Mammary epithelial cell (primary cell): ENCODE measurements at regions of chrX and their contacts with region 1.

Region 1: GRCh38 chrX:57651169-57651919 is 28.7 kb downstream of the NLRP2B start:
- DNase-seq: no peak
- H3K4me3 ChIP-seq: no peak overlapping the region
- H3K27ac ChIP-seq: no peak overlapping the region
- H3K4me1 ChIP-seq: no peaks in the 10 kb centered on the region
- H3K27me3 ChIP-seq: no peaks in the 10 kb centered on the region
- CTCF ChIP-seq: no peak

Region 2: DNA sequence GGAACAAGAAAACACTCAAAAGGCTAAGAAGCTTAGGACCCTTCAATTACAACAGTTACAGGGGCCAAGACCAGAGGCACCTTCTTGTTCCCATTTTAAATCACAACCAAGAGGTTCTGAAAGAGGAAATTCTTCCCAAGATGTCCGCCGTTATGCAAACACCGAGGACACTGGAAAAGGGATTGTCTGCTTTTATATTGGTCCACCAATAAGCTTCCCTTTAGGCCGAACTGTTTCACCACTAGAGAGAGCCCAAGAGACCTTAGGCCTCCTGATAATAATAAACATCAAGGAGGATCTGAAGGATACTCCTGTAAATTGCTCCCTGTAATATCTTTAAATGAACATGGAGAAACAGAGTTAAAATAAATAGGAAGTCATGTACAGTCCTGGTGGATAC is 121.3 kb after region 1 on chrX:
- CTCF ChIA-PET with region 1: no interaction called
- dilution Hi-C with region 1: loop called (anchors 25 kb)
- in situ Hi-C with region 1: no loop called
- intact Hi-C with region 1: no loop called
- DNase-seq: no peak
- H3K4me3 ChIP-seq: no peak overlapping the region
- H3K27ac ChIP-seq: no peak overlapping the region
- H3K4me1 ChIP-seq: no peaks in the 10 kb centered on the region
- H3K27me3 ChIP-seq: peaks cover 2% of the 10 kb centered on the region
- CTCF ChIP-seq: peak in 1 of 2 donors; percentile 17

Region 3: DNA sequence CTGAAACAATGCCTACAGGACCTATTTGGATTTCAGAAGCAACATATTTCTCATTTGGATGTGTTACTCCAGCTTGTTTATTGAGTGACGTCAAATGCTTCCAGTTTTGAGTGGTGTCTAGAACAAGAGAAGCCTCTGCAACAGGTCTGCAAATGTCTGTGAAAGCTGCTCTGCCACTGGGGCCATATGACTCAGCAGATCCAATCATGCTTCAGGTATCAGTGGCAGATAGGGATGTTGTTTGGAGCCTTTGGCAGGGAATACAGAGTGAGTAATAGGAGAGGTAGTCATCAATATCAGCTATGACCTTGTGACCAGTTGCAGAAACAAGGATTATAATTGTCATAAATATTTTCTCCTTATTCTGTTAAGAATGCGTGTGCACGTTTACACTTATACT is 400.0 kb after region 1 on chrX:
- CTCF ChIA-PET with region 1: no interaction called
- dilution Hi-C with region 1: no loop called
- in situ Hi-C with region 1: no loop called
- intact Hi-C with region 1: no loop called
- DNase-seq: peak; percentile 14
- H3K4me3 ChIP-seq: no peak overlapping the region
- H3K27ac ChIP-seq: no peak overlapping the region
- H3K4me1 ChIP-seq: no peaks in the 10 kb centered on the region
- H3K27me3 ChIP-seq: no peaks in the 10 kb centered on the region
- CTCF ChIP-seq: no peak